ENCODE measurements at regions of chr2 and their contacts with region 1.

Region 1: DNA sequence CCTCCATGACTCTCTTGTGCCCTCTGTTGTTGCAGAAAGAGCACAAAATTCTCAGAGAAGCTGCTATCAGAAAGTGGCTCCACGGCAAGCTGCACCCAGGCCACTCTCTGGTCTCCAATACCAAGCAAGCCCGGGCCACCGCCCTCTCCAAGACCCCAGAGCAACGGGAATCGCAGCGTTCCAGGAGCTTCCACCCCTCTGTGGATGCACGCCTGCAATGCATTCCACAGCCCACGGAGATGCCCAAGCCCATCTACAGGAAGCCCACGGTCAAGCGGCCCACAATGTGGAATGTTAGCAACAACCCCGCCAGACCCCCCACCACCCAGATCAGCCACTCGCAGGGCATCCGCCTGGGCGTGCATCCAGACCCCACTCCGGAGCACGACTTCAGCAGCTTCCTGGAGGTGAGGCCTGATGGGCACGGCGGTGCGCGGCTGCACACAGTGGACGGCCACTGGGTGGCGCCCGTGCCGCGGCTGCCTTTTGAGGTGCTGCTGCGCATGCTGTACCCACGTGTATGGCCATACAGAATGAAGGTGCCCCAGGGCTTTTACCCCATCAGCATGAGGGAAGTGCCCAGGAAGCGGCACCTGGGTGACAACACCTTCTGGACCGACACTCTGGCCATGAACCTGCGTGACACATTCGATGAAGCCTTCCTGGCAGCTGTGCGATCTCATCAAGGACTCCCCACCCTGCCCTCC is 6.3 kb downstream of the ANKRD53 start:
- DNase-seq: peak; percentile 71 to 85 (median 74)
- H3K4me3 ChIP-seq: no peak overlapping the region
- H3K4me3 Mint-ChIP-seq: peak overlapping the region in 3 of 7 donors; percentile 22 to 39 (median 23)
- H3K27ac ChIP-seq: no peak overlapping the region
- H3K27ac Mint-ChIP-seq: peak overlapping the region in 3 of 8 donors; percentile 24 to 70 (median 46)
- H3K4me1 ChIP-seq: peaks cover 7% of the 10 kb centered on the region
- H3K4me1 Mint-ChIP-seq: peaks cover 20 to 23% (median 22%) of the 10 kb centered on the region in 3 donors
- H3K27me3 ChIP-seq: no peaks in the 10 kb centered on the region
- H3K27me3 Mint-ChIP-seq: no peaks in the 10 kb centered on the region

Region 2: DNA sequence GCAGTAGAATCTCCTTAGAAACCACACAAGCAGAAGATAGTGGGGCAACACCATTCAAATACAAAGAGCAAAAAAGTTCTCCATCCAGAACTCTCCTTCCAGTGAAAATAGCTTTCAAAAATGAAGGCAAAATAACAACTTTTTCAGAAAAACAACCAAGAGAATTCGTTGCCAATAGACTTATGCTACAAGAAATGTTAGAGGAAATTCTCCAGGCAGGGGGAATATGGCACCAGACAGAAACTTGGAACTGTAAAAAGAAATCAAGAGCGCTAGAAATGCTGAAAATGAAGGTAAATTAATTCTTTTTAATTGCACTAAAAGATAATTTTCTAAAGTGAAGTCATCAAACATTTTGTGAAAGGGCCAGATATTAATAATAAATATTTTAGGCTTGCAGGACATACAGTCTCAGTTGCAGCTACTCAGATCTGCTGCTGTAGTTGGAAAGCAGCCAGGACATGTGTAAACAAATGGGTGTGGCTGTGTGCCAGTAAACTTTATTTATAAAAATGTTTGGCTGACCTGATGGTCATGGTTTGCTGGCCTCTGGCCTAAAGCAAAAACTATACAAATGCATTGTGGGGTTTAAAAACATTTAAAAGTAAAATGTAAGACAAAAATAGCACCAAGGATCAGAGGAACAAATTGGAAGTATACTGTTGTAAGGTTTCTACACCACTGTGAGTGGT is 357.4 kb before region 1 on chr2:
- CTCF ChIA-PET with region 1: no interaction called
- POLR2A ChIA-PET with region 1: no interaction called
- DNase-seq: no peak
- H3K4me3 ChIP-seq: no peak overlapping the region
- H3K4me3 Mint-ChIP-seq: no peak overlapping the region
- H3K27ac ChIP-seq: no peak overlapping the region
- H3K27ac Mint-ChIP-seq: no peak overlapping the region
- H3K4me1 ChIP-seq: no peaks in the 10 kb centered on the region
- H3K4me1 Mint-ChIP-seq: no peaks in the 10 kb centered on the region
- H3K27me3 ChIP-seq: no peaks in the 10 kb centered on the region
- H3K27me3 Mint-ChIP-seq: peaks cover 3 to 28% of the 10 kb centered on the region in 2 donors

Region 3: GRCh38 chr2:70994756-70995729 is 10.3 kb after region 1 on chr2 and contains the start of gene TEX261:
- CTCF ChIA-PET with region 1: interaction called, 46 read pairs
- POLR2A ChIA-PET with region 1: no interaction called
- DNase-seq: peak; percentile 85 to 91 (median 89)
- H3K4me3 ChIP-seq: peak within 1 kb of the TSS; percentile 98
- H3K4me3 Mint-ChIP-seq: peak within 1 kb of the TSS; percentile 93 to 99 (median 96)
- H3K27ac ChIP-seq: peak within 1 kb of the TSS; percentile 71
- H3K27ac Mint-ChIP-seq: peak within 1 kb of the TSS; percentile 85 to 98 (median 95)
- H3K4me1 ChIP-seq: peaks cover 21% of the 10 kb centered on the region
- H3K4me1 Mint-ChIP-seq: peaks cover 27 to 38% (median 31%) of the 10 kb centered on the region in 3 donors
- H3K27me3 ChIP-seq: no peaks in the 10 kb centered on the region
- H3K27me3 Mint-ChIP-seq: no peaks in the 10 kb centered on the region
- total RNA-seq, gene TEX261: 95.4 to 96.1 TPM

Region 4: DNA sequence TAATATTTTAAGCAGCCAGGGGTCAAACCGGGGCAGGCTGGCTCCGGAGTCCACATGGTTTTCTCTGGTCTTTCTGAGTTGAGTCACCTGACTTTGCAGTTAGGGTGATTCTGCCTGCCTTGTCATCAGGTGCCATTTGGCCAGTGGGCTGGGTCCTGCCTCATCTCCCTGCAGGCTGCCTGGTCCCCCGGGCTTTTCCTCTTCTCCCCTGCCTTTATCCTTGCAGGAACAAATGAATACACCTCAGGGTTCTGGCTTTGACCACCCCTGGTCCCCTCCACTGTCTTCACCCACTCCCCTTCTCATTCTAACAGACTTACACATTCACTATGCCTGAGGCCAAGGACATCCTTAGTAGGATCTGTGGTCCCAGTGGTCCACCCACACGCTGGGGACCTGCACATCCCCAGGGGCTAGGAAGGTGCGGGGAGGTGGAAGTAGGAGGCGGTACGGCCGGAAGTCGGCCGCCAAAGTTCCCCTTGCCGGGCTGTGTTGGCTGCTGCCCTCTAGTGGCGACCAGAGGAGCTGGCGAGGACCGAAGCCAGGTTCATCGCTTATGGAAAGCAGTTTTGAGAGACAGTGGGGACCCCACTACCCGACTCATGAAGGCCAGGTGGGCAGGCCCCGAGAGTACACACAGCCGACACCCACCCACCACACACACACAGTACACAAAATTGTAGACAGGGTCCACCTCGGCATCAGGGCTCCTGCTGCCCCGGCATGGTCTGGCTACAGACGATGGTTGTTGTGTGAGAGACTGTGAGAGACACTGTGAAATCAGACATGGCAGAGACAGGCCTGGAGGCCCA is 16.3 kb after region 1 on chr2:
- CTCF ChIA-PET with region 1: interaction called, 46 read pairs
- POLR2A ChIA-PET with region 1: no interaction called
- DNase-seq: peak; percentile 70 to 88 (median 74)
- H3K4me3 ChIP-seq: peak overlapping the region; percentile 62
- H3K4me3 Mint-ChIP-seq: peak overlapping the region; percentile 43 to 79 (median 61)
- H3K27ac ChIP-seq: no peak overlapping the region
- H3K27ac Mint-ChIP-seq: peak overlapping the region; percentile 6 to 87 (median 57)
- H3K4me1 ChIP-seq: peaks cover 8% of the 10 kb centered on the region
- H3K4me1 Mint-ChIP-seq: peaks cover 10 to 12% (median 12%) of the 10 kb centered on the region in 3 donors
- H3K27me3 ChIP-seq: no peaks in the 10 kb centered on the region
- H3K27me3 Mint-ChIP-seq: peaks cover 6 to 9% of the 10 kb centered on the region in 2 donors

Region 5: DNA sequence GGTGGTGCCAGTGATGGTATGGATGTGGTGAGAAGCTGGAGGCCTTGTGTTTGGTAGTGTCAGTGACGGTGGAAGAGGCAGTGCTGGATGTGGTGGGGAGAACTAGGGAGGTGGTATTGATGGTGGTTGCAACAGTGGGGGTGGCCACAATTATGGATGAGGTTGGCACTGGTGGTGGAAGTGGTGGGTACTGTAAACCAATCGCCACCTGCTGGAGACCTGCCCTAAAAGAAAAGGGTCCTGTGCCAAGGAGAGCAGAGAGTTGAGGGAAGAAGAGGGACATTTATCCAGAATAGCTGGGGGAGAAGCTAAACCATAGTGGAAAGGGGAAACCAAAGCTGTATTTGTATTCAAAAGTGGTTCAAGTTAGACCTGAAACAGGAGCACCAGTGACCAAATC is 888.9 kb after region 1 on chr2:
- CTCF ChIA-PET with region 1: no interaction called
- POLR2A ChIA-PET with region 1: no interaction called
- DNase-seq: no peak
- H3K4me3 ChIP-seq: no peak overlapping the region
- H3K4me3 Mint-ChIP-seq: no peak overlapping the region
- H3K27ac ChIP-seq: no peak overlapping the region
- H3K27ac Mint-ChIP-seq: no peak overlapping the region
- H3K4me1 ChIP-seq: no peaks in the 10 kb centered on the region
- H3K4me1 Mint-ChIP-seq: no peaks in the 10 kb centered on the region
- H3K27me3 ChIP-seq: no peaks in the 10 kb centered on the region
- H3K27me3 Mint-ChIP-seq: peaks cover 15 to 33% of the 10 kb centered on the region in 2 donors